H1 (cell line): ENCODE measurements at regions of chr6 and their contacts with region 1.

Region 1: GRCh38 chr6:121436960-121437850 is 1.8 kb downstream of the GJA1 start:
- DNase-seq: no peak
- H3K4me3 ChIP-seq: peak overlapping the region; percentile 85 to 94 (median 92)
- H3K27ac ChIP-seq: peak overlapping the region; percentile 91
- H3K4me1 ChIP-seq: peaks cover 0 to 19% (median 5%) of the 10 kb centered on the region in 4 experiments; a peak in 5 of 7 replicates
- H3K27me3 ChIP-seq: no peaks in the 10 kb centered on the region
- CTCF ChIP-seq: no peak
- EP300 ChIP-seq: no peak
- POLR2A ChIP-seq: peak; percentile 41 to 59; a peak in 2 of 3 replicates
- RAD21 ChIP-seq: no peak

Region 2: DNA sequence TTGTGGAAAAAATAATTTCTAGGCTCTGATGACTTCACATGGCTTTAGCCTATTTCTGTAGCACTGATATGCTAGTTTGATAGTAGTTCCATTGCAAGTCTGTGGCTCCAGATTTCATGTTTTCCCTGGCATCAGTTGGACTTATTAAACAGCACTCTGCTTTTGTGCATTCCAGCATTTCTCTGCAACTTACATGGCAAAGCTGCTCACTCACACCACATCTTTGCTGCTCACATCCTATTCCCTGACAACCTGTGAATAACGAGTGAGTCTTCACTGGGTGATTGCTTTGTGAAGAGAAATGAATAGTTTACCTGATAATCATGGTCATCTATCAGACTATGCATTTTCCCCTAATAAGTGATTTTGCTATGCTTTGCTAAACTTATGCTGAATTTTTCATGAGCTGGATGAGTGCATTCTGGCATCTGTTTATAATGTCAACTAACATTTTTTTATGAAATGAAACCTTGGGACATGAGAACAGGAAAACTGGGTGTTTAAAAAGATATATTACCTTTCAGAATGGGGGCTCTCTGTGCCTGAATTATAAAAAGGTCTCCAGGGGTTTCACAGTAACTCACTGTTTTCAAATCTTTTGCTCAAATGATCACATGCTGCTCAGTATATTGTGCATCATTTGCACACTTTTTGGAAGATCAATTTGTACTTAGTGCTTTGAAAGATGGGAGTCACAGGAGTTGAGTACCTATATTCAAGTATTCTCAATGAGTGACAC is 404.8 kb before region 1 on chr6:
- CTCF ChIA-PET with region 1: no interaction called
- POLR2A ChIA-PET with region 1: no interaction called
- DNase-seq: no peak
- H3K4me3 ChIP-seq: no peak overlapping the region
- H3K27ac ChIP-seq: no peak overlapping the region
- H3K4me1 ChIP-seq: no peaks in the 10 kb centered on the region
- H3K27me3 ChIP-seq: no peaks in the 10 kb centered on the region
- CTCF ChIP-seq: no peak
- EP300 ChIP-seq: no peak
- POLR2A ChIP-seq: no peak
- RAD21 ChIP-seq: no peak

Region 3: DNA sequence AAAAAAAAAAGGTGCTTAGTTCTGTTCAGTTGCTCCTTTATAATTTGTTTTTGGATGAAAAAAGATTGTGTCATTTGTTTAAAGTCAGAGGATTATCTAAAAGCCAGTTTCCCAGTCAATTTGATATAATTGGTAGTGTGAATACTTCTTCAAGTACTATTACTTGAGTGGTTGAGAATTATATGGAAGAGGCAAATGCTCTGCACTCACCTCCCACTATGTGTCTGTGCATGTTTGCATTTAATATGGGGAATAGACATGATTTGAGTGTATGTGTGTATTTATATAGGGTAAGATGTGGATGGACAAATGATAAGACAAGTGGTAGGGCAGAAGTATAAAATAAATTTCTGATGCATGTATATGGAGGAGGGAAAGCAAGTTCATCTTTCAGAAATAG is 14.0 kb after region 1 on chr6:
- CTCF ChIA-PET with region 1: interaction called, 5 read pairs
- POLR2A ChIA-PET with region 1: interaction called, 18 read pairs
- DNase-seq: no peak
- H3K4me3 ChIP-seq: no peak overlapping the region
- H3K27ac ChIP-seq: no peak overlapping the region
- H3K4me1 ChIP-seq: no peaks in the 10 kb centered on the region
- H3K27me3 ChIP-seq: no peaks in the 10 kb centered on the region
- CTCF ChIP-seq: no peak
- EP300 ChIP-seq: no peak
- POLR2A ChIP-seq: no peak
- RAD21 ChIP-seq: no peak

Region 4: DNA sequence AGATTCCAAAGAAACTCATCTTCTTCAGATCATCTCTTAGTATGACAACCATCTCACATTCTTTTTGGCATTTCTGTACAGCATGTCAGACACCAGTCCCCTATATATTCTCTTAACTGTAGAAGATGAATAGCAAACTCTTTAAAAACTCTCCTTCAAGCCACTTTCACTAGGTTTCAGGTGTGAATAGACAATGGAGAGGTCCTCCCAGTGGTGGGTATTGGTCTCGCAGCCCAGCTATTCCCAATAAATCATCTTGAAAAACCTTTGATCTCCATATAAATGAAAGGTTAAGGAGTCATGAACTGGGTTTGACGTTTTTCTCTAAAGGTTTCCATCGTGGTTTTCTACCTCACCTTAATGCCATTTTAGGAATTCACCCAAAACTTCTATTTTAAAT is 178.3 kb after region 1 on chr6:
- CTCF ChIA-PET with region 1: no interaction called
- POLR2A ChIA-PET with region 1: interaction called, 63 read pairs
- DNase-seq: no peak
- H3K4me3 ChIP-seq: no peak overlapping the region
- H3K27ac ChIP-seq: no peak overlapping the region
- H3K4me1 ChIP-seq: peaks cover 0 to 10% (median 6%) of the 10 kb centered on the region in 4 experiments; a peak in 4 of 7 replicates
- H3K27me3 ChIP-seq: no peaks in the 10 kb centered on the region
- CTCF ChIP-seq: peak in 1 of 3 experiments; percentile 48; a peak in 2 of 4 replicates
- EP300 ChIP-seq: no peak
- POLR2A ChIP-seq: no peak
- RAD21 ChIP-seq: peak; percentile 41 to 54